HEK293 (cell line): ENCODE measurements at regions of chr16 and their contacts with region 1.

Region 1: DNA sequence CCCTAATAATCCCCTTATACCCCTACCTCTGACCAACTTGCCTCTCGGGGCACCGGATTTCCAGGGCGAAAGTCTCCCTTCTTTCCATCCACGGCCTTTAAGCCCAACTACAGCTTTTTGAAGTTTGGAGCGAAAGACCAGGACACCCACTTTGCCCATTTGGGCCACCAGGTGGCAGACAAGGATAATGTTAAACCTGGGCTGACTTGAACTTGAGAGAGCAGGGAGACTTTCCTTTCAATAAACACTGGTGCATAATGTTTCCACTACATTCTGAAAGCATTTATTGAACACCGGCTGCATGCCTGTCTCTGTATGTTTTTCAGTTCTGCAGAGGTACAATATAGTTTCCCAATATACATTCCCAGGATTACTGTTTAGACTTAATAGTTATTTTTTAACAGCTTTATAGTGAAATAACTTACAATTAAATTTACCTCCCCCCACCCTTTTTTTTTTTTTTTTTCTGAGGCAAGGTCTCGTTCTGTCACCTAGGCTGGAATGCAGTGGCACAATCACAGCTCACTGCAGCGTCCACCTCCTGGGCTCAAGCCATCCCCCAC is 6.9 kb upstream of the CES3 start:
- H3K4me3 ChIP-seq: no peak overlapping the region
- H3K27ac ChIP-seq: no peak overlapping the region
- H3K4me1 ChIP-seq: no peaks in the 10 kb centered on the region
- CTCF ChIP-seq: peak; percentile 56; the same call in 1 of the 2 replicates

Region 2: GRCh38 chr16:66921729-66922450 is 32.3 kb before region 1 on chr16:
- CTCF ChIA-PET with region 1: no interaction called
- POLR2A ChIA-PET with region 1: no interaction called
- H3K4me3 ChIP-seq: no peak overlapping the region
- H3K27ac ChIP-seq: no peak overlapping the region
- H3K4me1 ChIP-seq: no peaks in the 10 kb centered on the region
- CTCF ChIP-seq: no peak

Region 3: DNA sequence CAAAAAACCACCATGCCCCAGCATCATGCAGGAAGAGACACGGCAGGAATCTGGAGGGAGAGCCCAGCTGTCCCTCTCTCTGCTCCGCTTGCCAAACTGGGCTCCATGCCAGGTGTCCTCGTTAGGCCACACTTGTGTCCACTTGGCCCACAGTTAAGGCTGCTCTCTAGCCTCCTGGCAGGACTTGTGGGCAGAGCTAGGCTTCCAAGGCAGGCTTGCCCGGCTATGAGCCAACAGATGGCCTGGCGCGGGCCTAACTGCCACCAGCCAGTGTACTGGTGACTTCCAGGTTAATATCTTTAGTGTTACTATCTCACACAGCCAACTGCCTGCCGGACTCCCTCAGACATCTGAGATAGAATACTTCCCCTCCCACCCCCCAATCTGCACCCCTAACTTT is 516.2 kb after region 1 on chr16:
- CTCF ChIA-PET with region 1: interaction called, 11 read pairs
- POLR2A ChIA-PET with region 1: no interaction called
- H3K4me3 ChIP-seq: no peak overlapping the region
- H3K27ac ChIP-seq: no peak overlapping the region
- H3K4me1 ChIP-seq: peaks cover 6% of the 10 kb centered on the region; the same call in 1 of the 2 replicates
- CTCF ChIP-seq: no peak